Left cardiac atrium (tissue), 4 donors: ENCODE measurements at regions of chr16 and their contacts with region 1.

Region 1: DNA sequence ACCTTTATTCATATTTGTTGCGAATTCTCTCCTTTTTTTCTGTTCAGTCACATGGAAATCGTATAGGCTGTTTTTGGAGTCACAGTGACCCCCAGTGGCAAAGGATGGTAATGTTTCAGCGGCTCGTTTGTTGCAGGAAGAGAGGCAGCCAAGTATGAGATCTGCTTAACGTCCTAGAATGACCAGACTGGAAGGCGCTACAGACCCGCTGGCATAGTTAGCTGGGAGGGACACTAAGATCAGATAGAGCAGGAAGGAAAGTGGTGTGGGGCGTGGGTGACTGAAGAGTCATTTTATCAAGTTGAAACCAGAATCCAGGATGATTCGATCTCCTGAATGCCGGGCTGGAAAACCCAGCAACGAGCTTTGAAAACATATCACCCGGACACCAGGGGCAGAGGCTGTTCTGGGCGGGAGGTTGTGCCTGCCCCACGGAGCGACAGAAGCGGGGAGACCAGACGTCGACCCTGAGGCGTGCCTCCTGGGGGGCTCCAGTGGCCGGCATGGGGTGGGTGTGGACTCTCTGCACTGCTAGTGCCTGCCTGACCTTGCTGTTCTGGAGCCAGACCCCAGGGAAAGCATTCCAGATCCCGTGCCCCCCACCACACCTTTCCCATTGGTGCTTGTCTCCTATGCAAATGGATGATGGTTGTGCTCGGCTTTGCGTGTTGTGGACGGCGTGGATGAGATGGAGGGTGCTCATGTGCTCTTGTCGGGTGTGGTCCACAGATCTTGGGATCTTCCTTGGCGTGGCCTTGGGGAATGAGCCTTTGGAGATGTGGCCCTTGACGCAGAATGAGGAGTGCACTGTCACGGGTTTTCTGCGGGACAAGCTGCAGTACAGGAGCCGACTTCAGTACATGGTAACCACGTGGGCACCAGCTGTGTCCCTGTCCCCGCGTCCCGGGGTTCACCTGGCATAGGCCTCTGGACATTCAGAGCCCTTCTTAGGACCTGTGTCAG is 7.7 kb downstream of the IL34 start:
- DNase-seq: peak; percentile 70
- ATAC-seq: peak; percentile 83 to 84

Region 2: DNA sequence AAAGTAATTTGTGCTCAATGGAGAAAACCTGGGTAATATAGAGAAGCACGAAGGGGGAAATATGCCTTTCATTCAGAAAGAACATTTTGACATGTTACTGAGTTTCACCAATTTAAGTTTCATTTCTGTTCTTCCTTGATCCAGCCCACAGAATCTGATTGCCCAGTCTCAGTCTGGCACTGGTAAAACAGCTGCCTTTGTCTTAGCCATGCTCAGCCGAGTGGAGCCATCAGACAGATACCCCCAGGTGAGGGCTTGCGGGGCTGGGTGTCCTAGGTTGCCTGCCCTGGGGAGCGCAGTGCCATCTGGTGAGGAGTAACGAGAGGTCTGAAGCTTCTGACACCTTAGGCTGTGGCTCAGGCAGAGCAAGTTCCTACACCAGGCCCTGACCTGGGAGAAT is 289.7 kb before region 1 on chr16:
- intact Hi-C with region 1: loop called in 1 of 2 experiments (anchors 10 kb)
- DNase-seq: no peak
- ATAC-seq: no peak

Region 3: DNA sequence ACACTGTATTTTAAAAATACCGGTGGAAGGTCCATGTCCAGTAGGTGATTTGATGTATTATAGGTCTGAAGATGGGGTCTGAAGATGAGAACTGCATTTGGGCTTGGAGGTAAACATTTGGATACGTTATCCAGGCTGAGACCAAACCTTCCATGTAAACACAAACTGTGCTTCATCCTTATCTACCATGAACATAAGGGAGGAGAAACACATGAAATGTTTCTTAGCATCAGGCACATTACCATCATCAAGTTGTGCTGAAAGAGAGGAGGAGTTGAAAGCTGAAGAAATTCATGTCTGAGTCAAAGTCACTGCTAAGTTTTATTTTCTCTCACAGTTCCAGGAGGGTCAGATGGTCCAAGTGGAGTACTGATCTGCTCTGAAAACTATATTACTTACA is 119.1 kb before region 1 on chr16:
- intact Hi-C with region 1: loop called in 1 of 2 experiments (anchors 5 kb)
- DNase-seq: no peak
- ATAC-seq: no peak